Activated CD4-positive, alpha-beta T cell treated with anti-CD3 and anti-CD28 coated beads, Interleukin-2, amount 10 ng/mL, durations not matched to agents 24 days and 14 days (primary cell): ENCODE measurements at regions of chr4 and their contacts with region 1.

Region 1: GRCh38 chr4:22739968-22740367 is 47.2 kb downstream of the GBA3 start:
- DNase-seq: no peak
- H3K4me3 Mint-ChIP-seq: no peak overlapping the region
- H3K27ac Mint-ChIP-seq: no peak overlapping the region
- H3K4me1 Mint-ChIP-seq: no peaks in the 10 kb centered on the region
- H3K27me3 Mint-ChIP-seq: peaks cover 2% of the 10 kb centered on the region

Region 2: GRCh38 chr4:22802876-22803275 is 62.9 kb after region 1 on chr4:
- intact Hi-C with region 1: loop called (anchors 10 kb)
- DNase-seq: no peak
- H3K4me3 Mint-ChIP-seq: no peak overlapping the region
- H3K27ac Mint-ChIP-seq: no peak overlapping the region
- H3K4me1 Mint-ChIP-seq: no peaks in the 10 kb centered on the region
- H3K27me3 Mint-ChIP-seq: no peaks in the 10 kb centered on the region